ENCODE measurements at regions of chr11 and their contacts with region 1.

Region 1: GRCh38 chr11:86947541-86947940 is 7.7 kb downstream of the FZD4 start:
- DNase-seq: no peak
- ATAC-seq: no peak
- H3K4me3 ChIP-seq: peak overlapping the region in 5 of 10 donors; percentile 96 to 100 (median 98)
- H3K27ac ChIP-seq: peak overlapping the region in 8 of 10 donors; percentile 41 to 99 (median 77)
- H3K4me1 ChIP-seq: peaks cover 13 to 91% (median 73%) of the 10 kb centered on the region in 9 donors
- H3K27me3 ChIP-seq: no peaks in the 10 kb centered on the region
- CTCF ChIP-seq: no peak

Region 2: DNA sequence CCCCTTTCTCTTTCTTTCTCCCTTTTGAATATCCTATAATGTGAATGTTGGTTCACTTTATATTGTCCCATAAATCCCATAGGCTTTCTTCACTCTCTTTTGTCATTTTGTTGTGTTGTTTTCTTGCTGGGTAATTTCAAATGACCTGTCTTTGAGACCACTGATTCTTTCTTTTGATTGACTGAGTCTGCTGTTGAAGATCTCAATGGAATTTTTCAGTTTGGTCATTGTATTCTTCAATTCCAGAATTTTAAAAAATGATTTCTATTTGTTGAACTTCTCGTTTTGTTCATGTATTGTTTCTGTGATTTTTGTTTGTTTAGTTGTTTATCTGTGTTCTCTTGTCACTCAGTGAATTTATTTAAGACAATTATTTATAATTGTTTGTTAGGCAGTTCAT is 25.2 kb after region 1 on chr11:
- intact Hi-C with region 1: no loop called
- DNase-seq: no peak
- ATAC-seq: no peak
- H3K4me3 ChIP-seq: no peak overlapping the region
- H3K27ac ChIP-seq: no peak overlapping the region
- H3K4me1 ChIP-seq: peaks cover 0 to 28% (median 6%) of the 10 kb centered on the region in 9 donors
- H3K27me3 ChIP-seq: no peaks in the 10 kb centered on the region
- CTCF ChIP-seq: no peak

Region 3: DNA sequence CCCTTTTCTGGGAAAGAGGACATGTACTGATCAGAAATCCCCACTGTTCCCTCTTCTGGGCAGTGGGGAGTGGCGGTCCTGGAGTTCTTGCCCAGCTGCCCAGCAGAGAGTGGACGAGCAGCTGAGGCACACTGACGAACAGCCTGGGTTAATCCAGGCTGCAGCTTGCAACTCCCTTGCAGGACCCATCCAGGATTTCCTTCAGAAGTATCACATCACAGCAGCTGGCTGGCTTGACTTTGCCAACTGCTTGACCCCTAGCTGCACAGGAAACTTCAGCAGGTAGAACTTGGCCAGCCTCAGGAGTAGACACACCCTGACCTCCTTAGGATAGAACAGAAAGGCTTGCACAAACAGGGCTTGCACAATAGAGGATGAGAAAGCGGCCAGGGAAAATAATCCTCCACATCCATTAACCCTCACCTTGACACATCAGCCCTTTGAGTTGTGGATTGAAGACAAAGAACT is 35.5 kb after region 1 on chr11:
- intact Hi-C with region 1: loop called in 1 of 10 experiments (anchors 5 kb)
- DNase-seq: peak in 1 of 2 donors; percentile 26
- ATAC-seq: peak; percentile 35 to 84 (median 58)
- H3K4me3 ChIP-seq: no peak overlapping the region
- H3K27ac ChIP-seq: peak overlapping the region in 1 of 10 donors; percentile 61
- H3K4me1 ChIP-seq: peaks cover 10 to 64% (median 27%) of the 10 kb centered on the region in 9 donors
- H3K27me3 ChIP-seq: no peaks in the 10 kb centered on the region
- CTCF ChIP-seq: no peak

Measured in heart right ventricle (tissue), 16 donors.